ENCODE measurements at regions of chr10 and their contacts with region 1.

Region 1: GRCh38 chr10:49177391-49178355 is 10.5 kb downstream of the TMEM273 start:
- DNase-seq: peak; percentile 88
- H3K4me3 Mint-ChIP-seq: peak overlapping the region; percentile 69
- H3K27ac Mint-ChIP-seq: peak overlapping the region; percentile 95
- H3K4me1 Mint-ChIP-seq: peaks cover 54% of the 10 kb centered on the region
- H3K27me3 Mint-ChIP-seq: no peaks in the 10 kb centered on the region

Region 2: GRCh38 chr10:49076741-49077521 is 100.7 kb before region 1 on chr10:
- intact Hi-C with region 1: loop called (anchors 2 kb)
- DNase-seq: peak; percentile 61
- H3K4me3 Mint-ChIP-seq: peak overlapping the region; percentile 54
- H3K27ac Mint-ChIP-seq: peak overlapping the region; percentile 81
- H3K4me1 Mint-ChIP-seq: peaks cover 28% of the 10 kb centered on the region
- H3K27me3 Mint-ChIP-seq: peaks cover 3% of the 10 kb centered on the region

Region 3: GRCh38 chr10:49164559-49165188 is 13.0 kb before region 1 on chr10:
- intact Hi-C with region 1: loop called (anchors 1 kb)
- DNase-seq: peak; percentile 84
- H3K4me3 Mint-ChIP-seq: no peak overlapping the region
- H3K27ac Mint-ChIP-seq: peak overlapping the region; percentile 12
- H3K4me1 Mint-ChIP-seq: peaks cover 25% of the 10 kb centered on the region
- H3K27me3 Mint-ChIP-seq: peaks cover 2% of the 10 kb centered on the region

Region 4: DNA sequence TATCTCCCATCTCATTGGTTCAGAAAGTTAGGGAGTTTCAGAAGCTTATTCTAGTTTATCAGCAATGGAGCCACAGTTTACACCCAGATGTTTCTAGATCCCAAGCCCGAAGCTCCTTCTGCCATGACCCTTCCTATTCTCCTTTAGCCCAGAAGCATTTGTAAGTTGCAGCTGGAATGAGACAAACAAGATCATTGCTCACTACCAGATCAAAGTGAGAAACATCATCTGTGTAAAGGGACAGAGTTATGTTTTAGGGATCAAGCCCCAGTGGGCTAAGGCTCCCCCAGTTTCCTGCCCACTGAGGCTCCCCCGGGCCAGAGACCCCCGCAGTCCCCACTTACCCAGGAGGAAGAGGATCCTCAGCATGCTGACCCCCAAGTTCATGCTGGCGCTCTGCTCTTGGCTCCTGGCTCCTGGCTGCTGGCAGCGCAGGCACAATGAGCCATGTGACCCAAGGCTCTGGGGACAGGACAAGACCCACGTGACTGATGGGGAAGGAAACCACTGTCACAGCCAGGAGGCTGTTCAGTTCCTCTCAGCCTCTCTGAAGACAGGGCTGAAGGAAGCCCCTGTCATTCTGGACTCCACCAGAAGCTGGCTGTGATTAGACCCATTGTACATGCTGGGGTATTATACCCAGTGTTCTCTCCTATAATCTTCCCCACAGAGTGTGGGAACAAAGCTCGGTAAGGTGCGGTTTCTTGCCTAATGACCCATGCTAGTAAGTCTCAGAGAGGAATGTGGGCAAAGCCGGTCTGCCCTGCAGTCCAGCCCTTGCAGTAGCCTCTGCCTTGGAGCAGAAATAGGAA is 10.5 kb after region 1 on chr10 and contains the start of gene TMEM273:
- intact Hi-C with region 1: loop called (anchors 1 kb)
- DNase-seq: peak; percentile 77
- H3K4me3 Mint-ChIP-seq: peak within 1 kb of the TSS; percentile 83
- H3K27ac Mint-ChIP-seq: peak within 1 kb of the TSS; percentile 77
- H3K4me1 Mint-ChIP-seq: peaks cover 50% of the 10 kb centered on the region
- H3K27me3 Mint-ChIP-seq: peaks cover 6% of the 10 kb centered on the region
- total RNA-seq, gene TMEM273: 34.3 and 36.4 TPM in 2 replicates

Region 5: DNA sequence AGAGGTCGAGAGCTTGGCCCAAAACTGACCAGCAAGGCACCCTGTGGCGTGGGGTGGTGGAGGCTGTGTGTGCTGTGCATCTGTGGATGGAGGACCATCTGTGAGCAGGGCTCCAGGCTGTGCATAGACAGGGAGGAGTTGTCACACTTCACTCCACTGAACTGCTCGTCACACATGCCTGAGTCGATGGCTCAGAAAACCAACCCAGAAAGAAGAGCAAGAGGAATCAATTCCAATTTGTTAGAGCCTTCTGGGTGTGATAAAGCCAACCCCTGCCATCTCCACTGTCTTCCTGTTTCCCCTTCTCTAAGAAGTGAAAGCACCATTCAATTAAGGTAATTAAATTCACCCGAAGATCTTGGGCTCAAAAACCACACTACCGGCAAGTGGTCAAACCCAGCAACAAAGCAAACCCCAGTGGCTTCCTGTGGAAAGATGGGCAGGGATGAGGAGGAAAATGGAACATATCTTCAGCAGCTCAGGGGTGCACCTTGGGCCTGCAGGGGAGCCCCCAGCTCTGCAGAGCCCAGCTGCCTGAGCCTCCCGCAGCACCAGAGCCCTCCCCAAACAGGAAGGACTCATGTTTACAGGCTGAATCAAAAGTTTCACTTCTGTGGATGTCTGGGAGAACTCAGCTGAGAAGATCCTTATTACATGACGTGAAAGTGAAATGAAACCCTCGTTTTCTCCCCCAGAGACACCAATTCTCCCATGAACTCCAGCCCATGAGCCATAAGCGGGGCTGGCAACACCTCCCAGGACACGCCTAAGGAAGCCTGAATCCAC is 132.1 kb after region 1 on chr10:
- intact Hi-C with region 1: loop called (anchors 1 kb)
- DNase-seq: peak; percentile 76
- H3K4me3 Mint-ChIP-seq: peak overlapping the region; percentile 11
- H3K27ac Mint-ChIP-seq: peak overlapping the region; percentile 25
- H3K4me1 Mint-ChIP-seq: peaks cover 19% of the 10 kb centered on the region
- H3K27me3 Mint-ChIP-seq: peaks cover 6% of the 10 kb centered on the region

Region 6: GRCh38 chr10:49538381-49539319 is 361.0 kb after region 1 on chr10 and contains the start of gene ERCC6:
- intact Hi-C with region 1: loop called (anchors 2 kb)
- DNase-seq: peak; percentile 98
- H3K4me3 Mint-ChIP-seq: peak within 1 kb of the TSS; percentile 91
- H3K27ac Mint-ChIP-seq: peak within 1 kb of the TSS; percentile 97
- H3K4me1 Mint-ChIP-seq: peaks cover 34% of the 10 kb centered on the region
- H3K27me3 Mint-ChIP-seq: peaks cover 12% of the 10 kb centered on the region
- total RNA-seq, gene ERCC6: 13.8 and 14.5 TPM in 2 replicates